Activated CD4-positive, alpha-beta memory T cell treated with anti-CD3 and anti-CD28 coated beads, Interleukin-2, amount 10 ng/mL, durations not matched to agents 7 days and 5 days (primary cell): ENCODE measurements at regions of chr14 and their contacts with region 1.

Region 1: DNA sequence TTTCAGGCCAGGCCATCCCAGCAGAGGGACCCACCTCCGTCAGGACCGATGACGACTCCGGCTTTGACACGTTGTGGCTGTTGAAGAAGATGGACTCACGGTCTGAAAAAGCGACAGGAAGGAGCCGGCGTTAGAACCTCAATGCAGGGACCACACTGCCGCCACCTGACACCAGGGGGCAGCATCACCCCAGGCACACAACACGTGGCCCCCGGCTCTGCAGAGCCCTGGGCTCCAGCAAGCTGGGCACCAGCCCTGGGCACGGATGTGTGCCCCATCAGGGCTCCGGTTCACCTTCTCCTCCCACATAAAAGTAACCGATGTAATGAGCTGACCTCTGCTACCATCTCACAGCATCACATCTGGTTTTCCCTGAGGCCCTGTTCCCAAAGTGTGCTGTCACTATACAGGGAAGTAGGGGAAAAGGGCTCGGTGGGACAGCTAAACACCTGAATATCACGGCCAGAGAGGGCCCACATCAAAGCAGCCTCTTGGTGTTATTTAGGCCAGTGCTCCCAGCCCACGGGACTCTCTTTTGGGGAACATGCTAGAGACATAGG is 29.0 kb downstream of the CHGA start:
- DNase-seq: peak; percentile 84
- H3K4me3 Mint-ChIP-seq: no peak overlapping the region
- H3K27ac Mint-ChIP-seq: no peak overlapping the region
- H3K4me1 Mint-ChIP-seq: no peaks in the 10 kb centered on the region
- H3K27me3 Mint-ChIP-seq: no peaks in the 10 kb centered on the region

Region 2: DNA sequence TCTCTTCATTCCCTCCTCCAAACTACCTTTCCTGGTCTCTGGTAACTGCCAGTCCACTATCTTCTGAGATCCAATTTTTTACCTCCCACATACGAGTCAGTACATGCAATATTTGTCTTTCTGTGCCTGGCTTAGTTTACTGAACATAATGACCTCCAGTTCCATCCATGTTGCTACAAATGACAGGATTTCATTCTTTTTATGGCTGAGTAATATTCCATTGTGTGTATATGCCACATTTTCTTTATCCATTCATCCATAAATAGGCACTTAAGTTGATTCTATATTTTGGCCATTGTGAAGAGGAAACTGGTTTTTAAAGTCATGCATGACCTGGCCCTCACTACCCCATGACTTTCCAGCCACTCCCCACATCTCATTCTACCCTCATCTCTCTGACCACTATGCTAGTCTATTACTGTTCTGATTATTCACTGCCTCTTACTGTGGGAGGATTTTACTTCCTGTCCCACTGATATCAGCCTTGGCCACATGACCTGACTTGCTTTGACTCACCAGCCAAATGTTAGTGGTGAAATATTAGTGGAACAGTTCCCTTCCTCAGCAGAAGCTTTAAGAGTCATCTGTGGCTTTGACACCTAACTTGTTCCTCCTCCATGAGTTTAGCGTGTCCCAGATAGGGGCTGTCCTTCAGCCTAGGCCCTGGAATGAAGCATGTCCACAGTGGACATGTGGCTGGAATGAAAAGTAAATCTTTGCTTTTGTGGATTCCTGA is 105.7 kb before region 1 on chr14:
- CTCF ChIA-PET with region 1: no interaction called
- POLR2A ChIA-PET with region 1: no interaction called
- DNase-seq: peak; percentile 41
- H3K4me3 Mint-ChIP-seq: no peak overlapping the region
- H3K27ac Mint-ChIP-seq: peak overlapping the region; percentile 19
- H3K4me1 Mint-ChIP-seq: peaks cover 40% of the 10 kb centered on the region
- H3K27me3 Mint-ChIP-seq: no peaks in the 10 kb centered on the region

Region 3: GRCh38 chr14:92880869-92881289 is 71.1 kb before region 1 on chr14:
- CTCF ChIA-PET with region 1: no interaction called
- POLR2A ChIA-PET with region 1: no interaction called
- DNase-seq: no peak
- H3K4me3 Mint-ChIP-seq: no peak overlapping the region
- H3K27ac Mint-ChIP-seq: no peak overlapping the region
- H3K4me1 Mint-ChIP-seq: no peaks in the 10 kb centered on the region
- H3K27me3 Mint-ChIP-seq: peaks cover 39% of the 10 kb centered on the region

Region 4: GRCh38 chr14:93137864-93138263 is 185.9 kb after region 1 on chr14:
- CTCF ChIA-PET with region 1: interaction called, 14 read pairs
- POLR2A ChIA-PET with region 1: no interaction called
- DNase-seq: no peak
- H3K4me3 Mint-ChIP-seq: no peak overlapping the region
- H3K27ac Mint-ChIP-seq: no peak overlapping the region
- H3K4me1 Mint-ChIP-seq: peaks cover 4% of the 10 kb centered on the region
- H3K27me3 Mint-ChIP-seq: peaks cover 2% of the 10 kb centered on the region